Aorta (tissue), 5 donors: ENCODE measurements at regions of chr21 and their contacts with region 1.

Region 1: GRCh38 chr21:29080454-29080941 is 7.0 kb upstream of the CCT8 start:
- DNase-seq: no peak
- ATAC-seq: no peak
- H3K4me3 ChIP-seq: no peak overlapping the region
- H3K27ac ChIP-seq: peak overlapping the region; percentile 69 to 77
- H3K4me1 ChIP-seq: peaks cover 0 to 2% of the 10 kb centered on the region in 2 donors
- H3K27me3 ChIP-seq: no peaks in the 10 kb centered on the region

Region 2: DNA sequence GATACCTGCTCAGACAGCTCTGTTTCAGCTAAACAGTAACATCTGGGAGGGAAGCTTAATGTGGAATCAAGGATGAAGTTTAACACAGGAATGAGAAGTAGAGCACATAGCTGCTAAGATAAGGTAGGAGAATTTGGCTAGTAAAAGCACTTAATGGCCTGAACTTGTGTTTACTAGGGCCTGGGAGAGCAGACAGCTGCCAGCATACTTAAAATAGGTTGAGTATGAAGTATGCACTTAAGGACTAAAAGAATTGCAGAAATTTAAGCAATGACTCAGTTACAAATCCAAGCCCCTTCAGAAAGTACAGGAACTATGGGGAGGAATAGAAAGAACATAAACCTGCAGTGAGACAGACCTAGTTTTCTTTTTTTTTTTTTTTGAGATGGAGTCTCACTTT is 271.2 kb after region 1 on chr21:
- intact Hi-C with region 1: loop called in 1 of 2 experiments (anchors 5 kb)
- DNase-seq: no peak
- ATAC-seq: no peak
- H3K4me3 ChIP-seq: no peak overlapping the region
- H3K27ac ChIP-seq: peak overlapping the region in 1 of 2 donors; percentile 45
- H3K4me1 ChIP-seq: peaks cover 5% of the 10 kb centered on the region in 2 donors
- H3K27me3 ChIP-seq: no peaks in the 10 kb centered on the region

Region 3: DNA sequence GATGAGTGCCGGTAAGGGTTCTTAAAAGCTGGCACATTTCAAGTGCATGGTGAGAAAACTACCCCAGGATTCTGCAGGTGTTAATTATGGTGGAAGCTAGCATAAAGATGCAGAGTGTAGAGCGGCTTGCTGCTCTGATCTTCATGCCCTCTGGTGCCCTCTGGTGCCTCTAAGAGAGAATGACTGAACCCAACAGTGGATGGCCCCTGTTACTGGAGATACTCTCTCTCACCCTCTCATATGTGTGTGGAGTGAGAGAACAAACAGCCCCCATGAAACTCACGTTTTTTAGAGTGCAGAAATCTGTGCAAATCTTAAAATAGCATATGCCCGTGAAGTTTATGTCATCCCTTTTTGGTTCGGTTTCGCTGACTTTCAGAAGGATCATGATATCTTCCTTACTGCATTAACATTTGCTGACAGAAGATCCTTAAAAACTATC is 769.3 kb after region 1 on chr21:
- intact Hi-C with region 1: loop called in 1 of 2 experiments (anchors 10 kb)
- DNase-seq: peak in 1 of 2 donors; percentile 50
- ATAC-seq: peak; percentile 83
- H3K4me3 ChIP-seq: no peak overlapping the region
- H3K27ac ChIP-seq: no peak overlapping the region
- H3K4me1 ChIP-seq: no peaks in the 10 kb centered on the region
- H3K27me3 ChIP-seq: no peaks in the 10 kb centered on the region